Left ventricle myocardium inferior (tissue), 1 donor: ENCODE measurements at regions of chr1 and their contacts with region 1.

Region 1: DNA sequence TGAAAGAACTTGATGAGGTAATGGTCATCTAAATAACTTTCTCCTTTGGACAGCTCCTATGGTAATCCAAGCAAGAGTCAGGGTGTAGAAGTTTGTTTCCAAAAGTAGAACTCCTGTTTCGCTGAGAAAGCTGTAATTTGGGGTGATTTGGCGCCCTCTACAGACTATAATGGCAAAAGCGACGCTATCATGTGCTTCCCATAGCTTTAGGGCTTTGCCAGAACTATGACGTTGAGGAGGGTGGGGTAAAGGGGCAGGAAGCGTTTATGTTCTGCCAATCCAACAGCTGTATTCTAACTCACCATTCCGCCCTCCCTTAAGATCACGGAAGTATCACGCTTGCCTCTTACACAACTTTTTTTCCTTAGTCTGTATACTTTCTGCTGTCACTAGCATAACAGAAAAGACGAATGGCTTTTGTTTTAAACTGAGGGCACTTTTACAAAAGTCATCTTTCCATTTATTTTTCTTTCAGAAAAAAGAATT is at the start of gene FMO4:
- DNase-seq: peak; percentile 73
- H3K4me3 ChIP-seq: peak within 1 kb of the TSS; percentile 61
- H3K27ac ChIP-seq: peak within 1 kb of the TSS; percentile 80
- H3K4me1 ChIP-seq: peaks cover 16% of the 10 kb centered on the region
- H3K27me3 ChIP-seq: no peaks in the 10 kb centered on the region
- CTCF ChIP-seq: peak; percentile 87
- total RNA-seq, gene FMO4: 5.4 TPM

Region 2: DNA sequence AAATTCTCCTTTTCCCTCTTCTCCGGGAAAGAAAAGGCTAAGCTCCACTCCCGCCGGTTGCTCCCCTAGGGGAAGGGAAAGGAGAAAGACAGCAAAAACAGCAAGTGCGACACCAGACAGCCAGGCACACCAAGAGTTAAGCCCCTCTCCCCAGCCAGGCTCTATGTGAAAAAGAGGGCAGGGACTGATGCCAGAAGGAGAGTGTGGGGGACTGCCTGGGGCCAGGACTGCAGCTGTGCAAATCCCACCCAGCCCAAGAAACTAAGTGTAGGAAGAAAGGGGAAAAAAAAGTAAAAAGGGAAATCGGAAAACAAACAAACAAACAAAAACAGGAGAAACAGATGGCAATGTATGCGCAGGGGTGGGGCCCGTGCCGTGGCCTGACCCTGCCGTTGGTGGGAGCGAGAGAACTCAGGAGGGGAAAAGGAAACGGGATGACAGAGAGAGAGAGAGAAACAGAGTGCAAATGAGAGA is 93.3 kb before region 1 on chr1:
- intact Hi-C with region 1: no loop called
- DNase-seq: no peak
- H3K4me3 ChIP-seq: peak overlapping the region; percentile 32
- H3K27ac ChIP-seq: peak overlapping the region; percentile 78
- H3K4me1 ChIP-seq: peaks cover 38% of the 10 kb centered on the region
- H3K27me3 ChIP-seq: no peaks in the 10 kb centered on the region
- CTCF ChIP-seq: no peak

Region 3: DNA sequence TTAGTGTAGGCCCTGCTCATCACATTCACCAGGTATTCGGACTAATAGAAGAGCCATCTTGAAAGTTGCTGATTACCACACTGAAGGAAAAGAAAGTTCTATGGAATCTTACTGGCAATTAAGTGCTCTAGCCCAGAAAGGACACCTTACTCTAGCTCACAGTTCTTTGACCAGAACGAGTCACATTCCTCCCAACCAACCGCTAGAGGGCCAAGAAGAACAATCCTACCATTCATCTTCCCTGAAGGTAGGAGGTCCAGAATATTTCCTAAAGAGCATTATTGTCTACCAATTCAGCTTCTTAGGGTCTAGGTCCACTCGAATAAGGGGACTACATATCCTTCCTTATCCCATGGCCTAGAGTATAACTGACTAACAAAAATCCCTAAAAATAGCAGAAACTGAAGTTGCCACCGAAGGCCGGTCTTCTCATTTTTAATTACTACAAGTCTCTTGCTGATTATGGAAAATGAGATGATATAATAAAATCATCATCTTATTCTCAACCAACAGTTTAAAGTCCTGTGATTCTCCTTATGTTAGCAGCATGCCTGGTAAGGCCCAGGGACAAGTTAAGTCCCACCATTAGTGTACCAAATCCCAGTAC is 68.3 kb before region 1 on chr1:
- intact Hi-C with region 1: loop called (anchors 5 kb)
- DNase-seq: no peak
- H3K4me3 ChIP-seq: no peak overlapping the region
- H3K27ac ChIP-seq: no peak overlapping the region
- H3K4me1 ChIP-seq: peaks cover 3% of the 10 kb centered on the region
- H3K27me3 ChIP-seq: no peaks in the 10 kb centered on the region
- CTCF ChIP-seq: peak; percentile 78